ENCODE measurements at regions of chr7 and their contacts with region 1.

Region 1: GRCh38 chr7:17706734-17707133 is 233.6 kb downstream of the SNX13 start:
- DNase-seq: peak; percentile 74
- H3K4me3 ChIP-seq: no peak overlapping the region
- H3K27ac ChIP-seq: no peak overlapping the region
- H3K4me1 ChIP-seq: no peaks in the 10 kb centered on the region
- H3K27me3 ChIP-seq: peaks cover 3 to 6% of the 10 kb centered on the region in 2 experiments
- CTCF ChIP-seq: peak; percentile 48 to 64
- POLR2A ChIP-seq: no peak

Region 2: DNA sequence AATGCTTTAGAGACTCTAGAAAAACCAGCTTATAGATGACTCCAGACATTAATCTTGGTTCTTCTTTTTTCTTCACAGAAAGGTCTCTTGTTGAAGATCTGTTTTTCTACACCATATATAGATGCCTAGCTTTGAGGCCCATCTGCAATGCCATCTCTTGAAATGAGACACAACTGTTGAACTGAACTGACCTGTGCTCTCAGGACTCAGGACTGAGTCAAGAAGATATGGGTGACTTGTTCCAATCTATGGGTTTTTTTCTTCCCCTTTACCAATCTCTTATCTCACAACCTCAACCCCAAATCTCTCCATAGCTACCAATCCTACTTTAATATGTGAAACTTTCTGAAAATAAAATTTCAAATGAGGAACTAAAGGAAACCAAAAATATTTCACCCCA is 38.9 kb after region 1 on chr7:
- CTCF ChIA-PET with region 1: no interaction called
- POLR2A ChIA-PET with region 1: no interaction called
- dilution Hi-C with region 1: no loop called
- intact Hi-C with region 1: no loop called
- DNase-seq: no peak
- H3K4me3 ChIP-seq: no peak overlapping the region
- H3K27ac ChIP-seq: no peak overlapping the region
- H3K4me1 ChIP-seq: no peaks in the 10 kb centered on the region
- H3K27me3 ChIP-seq: no peaks in the 10 kb centered on the region
- CTCF ChIP-seq: no peak
- POLR2A ChIP-seq: no peak

Region 3: GRCh38 chr7:17991866-17992648 is 285.3 kb after region 1 on chr7:
- CTCF ChIA-PET with region 1: no interaction called
- POLR2A ChIA-PET with region 1: no interaction called
- dilution Hi-C with region 1: no loop called
- intact Hi-C with region 1: loop called (anchors 5 kb)
- DNase-seq: no peak
- H3K4me3 ChIP-seq: no peak overlapping the region
- H3K27ac ChIP-seq: no peak overlapping the region
- H3K4me1 ChIP-seq: no peaks in the 10 kb centered on the region
- H3K27me3 ChIP-seq: no peaks in the 10 kb centered on the region
- CTCF ChIP-seq: peak in 1 of 2 donors; percentile 13
- POLR2A ChIP-seq: no peak

Region 4: GRCh38 chr7:18087031-18087686 is 380.4 kb after region 1 on chr7:
- CTCF ChIA-PET with region 1: no interaction called
- POLR2A ChIA-PET with region 1: no interaction called
- dilution Hi-C with region 1: no loop called
- intact Hi-C with region 1: no loop called
- DNase-seq: peak; percentile 20
- H3K4me3 ChIP-seq: peak overlapping the region; percentile 39 to 88 (median 62)
- H3K27ac ChIP-seq: no peak overlapping the region
- H3K4me1 ChIP-seq: peaks cover 4% of the 10 kb centered on the region
- H3K27me3 ChIP-seq: no peaks in the 10 kb centered on the region
- CTCF ChIP-seq: no peak
- POLR2A ChIP-seq: no peak

Region 5: GRCh38 chr7:18119985-18120384 is 413.3 kb after region 1 on chr7:
- CTCF ChIA-PET with region 1: interaction called, 4 read pairs
- POLR2A ChIA-PET with region 1: no interaction called
- dilution Hi-C with region 1: no loop called
- intact Hi-C with region 1: loop called (anchors 1 kb)
- DNase-seq: peak; percentile 21
- H3K4me3 ChIP-seq: no peak overlapping the region
- H3K27ac ChIP-seq: no peak overlapping the region
- H3K4me1 ChIP-seq: no peaks in the 10 kb centered on the region
- H3K27me3 ChIP-seq: no peaks in the 10 kb centered on the region
- CTCF ChIP-seq: peak; percentile 33 to 54
- POLR2A ChIP-seq: no peak

Region 6: GRCh38 chr7:18144166-18144565 is 437.4 kb after region 1 on chr7:
- CTCF ChIA-PET with region 1: no interaction called
- POLR2A ChIA-PET with region 1: no interaction called
- dilution Hi-C with region 1: no loop called
- intact Hi-C with region 1: no loop called
- DNase-seq: no peak
- H3K4me3 ChIP-seq: no peak overlapping the region
- H3K27ac ChIP-seq: no peak overlapping the region
- H3K4me1 ChIP-seq: no peaks in the 10 kb centered on the region
- H3K27me3 ChIP-seq: no peaks in the 10 kb centered on the region
- CTCF ChIP-seq: no peak
- POLR2A ChIP-seq: no peak

Region 7: DNA sequence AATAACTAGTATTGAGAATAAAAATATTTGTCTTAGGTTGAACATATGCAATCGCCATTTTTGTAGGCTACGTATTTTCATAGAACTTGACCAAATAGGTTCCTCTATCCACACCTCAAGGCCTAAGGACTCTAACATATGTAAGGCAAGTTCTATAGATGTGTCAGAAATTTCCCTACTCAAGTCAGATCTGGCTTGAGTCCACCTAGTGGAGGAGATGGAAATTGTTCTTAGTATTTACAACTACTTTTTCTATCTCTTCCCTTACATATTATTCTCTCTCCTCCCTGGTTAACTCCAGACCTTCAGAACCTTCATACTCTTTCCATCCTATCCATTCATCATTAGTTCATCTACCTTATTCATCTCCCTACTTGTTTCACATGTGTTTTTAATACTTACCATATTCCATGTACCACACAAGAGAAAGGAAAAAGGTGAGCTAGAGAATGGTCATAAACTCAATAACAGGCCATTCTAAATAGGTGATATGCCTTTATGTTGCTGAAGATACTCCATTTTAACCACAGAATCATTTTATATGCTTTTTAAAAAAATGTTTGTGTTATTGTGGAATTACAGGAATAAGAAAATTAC is 614.3 kb after region 1 on chr7:
- CTCF ChIA-PET with region 1: interaction called, 20 read pairs
- POLR2A ChIA-PET with region 1: no interaction called
- dilution Hi-C with region 1: no loop called
- intact Hi-C with region 1: loop called (anchors 2 kb)
- DNase-seq: peak; percentile 65
- H3K4me3 ChIP-seq: no peak overlapping the region
- H3K27ac ChIP-seq: no peak overlapping the region
- H3K4me1 ChIP-seq: no peaks in the 10 kb centered on the region
- H3K27me3 ChIP-seq: no peaks in the 10 kb centered on the region
- CTCF ChIP-seq: peak; percentile 27 to 49
- POLR2A ChIP-seq: no peak

Region 8: DNA sequence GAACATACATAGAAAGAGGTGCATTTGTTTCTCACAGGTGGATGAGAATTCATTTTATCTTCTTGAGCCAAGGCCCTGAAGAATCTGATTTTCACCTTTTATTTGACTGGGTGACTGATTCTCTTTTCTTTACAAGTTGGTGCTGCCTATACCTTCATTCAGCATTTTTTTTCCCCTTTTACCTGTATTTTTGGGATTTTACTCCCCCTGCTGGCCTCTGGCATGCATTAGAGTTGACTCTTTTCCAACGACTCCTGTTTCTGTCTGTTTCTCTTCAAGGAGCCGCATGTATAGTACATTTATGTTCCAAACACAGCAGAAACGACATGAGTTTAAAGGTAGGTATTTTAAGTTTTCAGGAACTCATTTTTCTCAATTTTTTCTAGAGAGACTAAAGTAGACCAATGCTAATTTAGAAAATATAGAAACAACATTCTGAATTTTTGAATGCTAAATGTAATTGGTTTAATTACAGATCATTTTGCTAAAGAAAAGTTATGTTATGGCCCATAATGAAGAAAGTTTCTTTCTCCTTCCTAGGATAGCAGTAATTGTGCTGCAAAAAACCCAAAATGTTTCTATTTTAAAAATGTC is 639.0 kb after region 1 on chr7:
- CTCF ChIA-PET with region 1: interaction called, 66 read pairs
- POLR2A ChIA-PET with region 1: no interaction called
- dilution Hi-C with region 1: no loop called
- intact Hi-C with region 1: loop called (anchors 1 kb)
- DNase-seq: peak; percentile 72
- H3K4me3 ChIP-seq: no peak overlapping the region
- H3K27ac ChIP-seq: no peak overlapping the region
- H3K4me1 ChIP-seq: no peaks in the 10 kb centered on the region
- H3K27me3 ChIP-seq: no peaks in the 10 kb centered on the region
- CTCF ChIP-seq: peak; percentile 70 to 74
- POLR2A ChIP-seq: no peak